ENCODE measurements at regions of chr7 and their contacts with region 1.

Region 1: GRCh38 chr7:107253599-107253998 is 84.8 kb downstream of the HBP1 start:
- DNase-seq: no peak
- ATAC-seq: no peak
- H3K4me3 ChIP-seq: no peak overlapping the region
- H3K27ac ChIP-seq: no peak overlapping the region
- H3K4me1 ChIP-seq: no peaks in the 10 kb centered on the region
- H3K27me3 ChIP-seq: no peaks in the 10 kb centered on the region
- CTCF ChIP-seq: no peak
- POLR2A ChIP-seq: no peak
- RAD21 ChIP-seq: no peak

Region 2: DNA sequence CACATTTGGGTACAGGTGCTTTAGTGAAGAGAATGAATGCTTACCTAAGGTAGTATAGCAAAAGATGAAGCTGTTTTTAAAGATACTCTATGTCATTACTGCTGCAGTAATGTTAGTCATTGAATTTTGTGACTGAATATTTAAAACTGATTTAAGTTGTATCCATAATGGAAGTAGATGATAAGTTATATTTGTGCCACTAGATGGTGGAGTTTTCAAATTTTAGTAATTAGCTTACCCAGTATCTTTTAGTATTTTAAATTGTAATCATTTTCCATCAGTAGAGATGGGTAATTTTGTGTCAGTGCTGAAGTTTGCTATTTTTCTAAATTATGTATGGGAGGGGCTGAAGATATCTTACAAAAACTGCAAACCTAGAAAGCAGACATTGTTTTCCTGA is 59.5 kb before region 1 on chr7:
- CTCF ChIA-PET with region 1: no interaction called
- POLR2A ChIA-PET with region 1: no interaction called
- RAD21 ChIA-PET with region 1: no interaction called
- intact Hi-C with region 1: no loop called
- DNase-seq: no peak
- ATAC-seq: no peak
- H3K4me3 ChIP-seq: no peak overlapping the region
- H3K27ac ChIP-seq: no peak overlapping the region
- H3K4me1 ChIP-seq: no peaks in the 10 kb centered on the region
- H3K27me3 ChIP-seq: no peaks in the 10 kb centered on the region
- CTCF ChIP-seq: no peak
- POLR2A ChIP-seq: no peak
- RAD21 ChIP-seq: no peak

Region 3: DNA sequence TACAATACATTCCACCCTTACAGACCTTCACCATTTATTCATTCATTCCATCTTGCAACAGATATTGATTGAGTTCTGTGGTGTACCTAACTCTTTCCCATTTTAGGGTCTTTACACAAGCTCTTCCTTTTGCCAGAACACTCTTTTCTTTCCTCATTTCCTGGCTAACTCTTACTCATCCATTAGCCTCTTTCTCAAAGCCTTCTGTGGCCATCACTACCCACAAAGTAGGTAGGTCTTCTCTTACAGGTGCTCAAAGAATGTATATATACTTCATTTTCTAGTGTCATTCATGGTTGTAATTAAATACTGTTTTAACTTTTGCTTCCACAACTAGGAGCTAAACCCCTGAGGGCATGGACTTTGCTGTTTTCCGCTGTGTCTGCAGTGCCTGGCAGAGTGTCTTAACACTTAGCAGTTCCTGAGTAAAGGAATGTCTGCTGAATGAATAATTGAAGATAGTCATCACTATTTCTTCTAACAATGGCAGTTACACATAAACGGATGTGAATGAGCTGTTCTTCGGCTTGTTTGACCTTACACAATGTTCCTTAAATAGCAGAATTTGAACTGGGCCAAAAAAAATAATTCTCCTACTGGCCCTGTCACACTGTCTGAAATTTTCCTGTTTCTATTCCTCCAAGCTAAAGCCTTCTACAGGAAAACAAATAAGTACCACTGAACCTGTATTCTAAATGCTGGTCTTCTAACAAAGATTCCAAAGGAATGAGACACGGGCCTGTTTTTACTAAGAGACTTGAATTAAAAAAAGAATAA is 341.6 kb after region 1 on chr7:
- CTCF ChIA-PET with region 1: no interaction called
- POLR2A ChIA-PET with region 1: no interaction called
- RAD21 ChIA-PET with region 1: no interaction called
- intact Hi-C with region 1: loop called (anchors 10 kb)
- DNase-seq: no peak
- ATAC-seq: no peak
- H3K4me3 ChIP-seq: no peak overlapping the region
- H3K27ac ChIP-seq: no peak overlapping the region
- H3K4me1 ChIP-seq: no peaks in the 10 kb centered on the region
- H3K27me3 ChIP-seq: no peaks in the 10 kb centered on the region
- CTCF ChIP-seq: no peak
- POLR2A ChIP-seq: no peak
- RAD21 ChIP-seq: no peak